A549 (cell line): ENCODE measurements at regions of chr22 and their contacts with region 1.

Region 1: GRCh38 chr22:24532103-24532520 is 22.8 kb downstream of the GUCD1 start:
- DNase-seq: no peak
- ATAC-seq: no peak
- H3K4me3 ChIP-seq: no peak overlapping the region
- H3K27ac ChIP-seq: no peak overlapping the region
- H3K4me1 ChIP-seq: no peaks in the 10 kb centered on the region; the same call in 2 of the 3 replicates
- CTCF ChIP-seq: no peak
- EP300 ChIP-seq: no peak
- POLR2A ChIP-seq: no peak
- RAD21 ChIP-seq: no peak

Region 2: DNA sequence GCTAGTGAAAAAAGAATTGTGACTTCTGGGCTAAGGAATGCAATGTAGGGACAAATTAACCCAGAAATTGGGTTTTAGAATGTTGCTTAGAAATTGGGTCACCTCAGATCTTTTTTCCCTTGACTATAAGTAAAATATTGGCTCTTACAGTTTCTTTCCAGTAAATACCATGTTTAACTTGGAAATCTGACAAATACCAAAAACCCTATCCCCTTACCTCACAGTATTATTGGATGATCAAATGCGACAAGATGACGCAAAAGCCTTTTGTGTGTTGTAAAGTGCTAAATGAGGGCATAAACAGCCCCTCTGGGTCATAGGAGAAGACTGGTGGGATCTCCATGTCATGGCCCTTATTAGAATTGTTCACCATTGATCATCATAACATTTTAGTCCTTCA is 43.1 kb before region 1 on chr22:
- CTCF ChIA-PET with region 1: no interaction called
- POLR2A ChIA-PET with region 1: no interaction called
- DNase-seq: no peak
- ATAC-seq: no peak
- H3K4me3 ChIP-seq: no peak overlapping the region
- H3K27ac ChIP-seq: no peak overlapping the region
- H3K4me1 ChIP-seq: peaks cover 16% of the 10 kb centered on the region
- CTCF ChIP-seq: no peak
- EP300 ChIP-seq: no peak
- POLR2A ChIP-seq: no peak
- RAD21 ChIP-seq: no peak

Region 3: DNA sequence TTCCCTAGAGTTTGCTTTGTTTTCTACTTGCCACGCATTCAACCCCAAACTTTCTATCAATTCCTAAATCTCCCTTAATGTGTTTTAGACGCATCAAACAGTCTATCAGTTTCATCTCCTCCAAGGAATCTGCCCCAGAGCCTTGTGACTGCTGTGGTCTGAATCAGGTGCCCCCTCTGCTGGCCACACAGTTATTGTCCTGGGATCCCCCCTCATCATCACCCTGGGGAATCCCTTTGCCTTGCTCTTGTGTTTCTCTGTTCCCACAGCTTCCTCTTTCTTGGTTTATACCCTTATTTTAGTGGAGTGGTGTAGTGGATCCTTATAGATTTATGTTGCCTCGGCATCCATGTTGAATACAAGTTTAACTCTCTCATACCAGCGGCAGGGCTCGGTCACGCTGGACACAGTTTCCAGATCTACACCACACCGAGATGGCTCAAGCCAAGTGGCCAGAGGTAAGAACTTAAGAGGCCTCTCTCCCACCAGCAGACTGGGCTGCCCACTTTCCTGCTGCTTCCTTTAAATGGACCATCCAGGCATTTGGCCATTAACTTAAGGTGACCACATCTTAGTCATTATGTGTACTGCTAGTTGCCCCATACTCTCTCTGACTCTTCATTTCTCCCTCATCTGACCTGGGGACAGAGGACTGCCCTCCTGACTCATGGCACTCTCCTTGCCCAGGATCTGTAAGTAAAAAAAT is 28.8 kb before region 1 on chr22:
- CTCF ChIA-PET with region 1: interaction called, 13 read pairs
- POLR2A ChIA-PET with region 1: no interaction called
- DNase-seq: peak; percentile 36 to 71
- ATAC-seq: peak; percentile 89 to 91
- H3K4me3 ChIP-seq: no peak overlapping the region
- H3K27ac ChIP-seq: no peak overlapping the region
- H3K4me1 ChIP-seq: peaks cover 25% of the 10 kb centered on the region
- CTCF ChIP-seq: peak; percentile 62
- EP300 ChIP-seq: no peak
- POLR2A ChIP-seq: no peak
- RAD21 ChIP-seq: peak; percentile 67 to 75